ENCODE measurements at regions of chr7 and their contacts with region 1.

Region 1: DNA sequence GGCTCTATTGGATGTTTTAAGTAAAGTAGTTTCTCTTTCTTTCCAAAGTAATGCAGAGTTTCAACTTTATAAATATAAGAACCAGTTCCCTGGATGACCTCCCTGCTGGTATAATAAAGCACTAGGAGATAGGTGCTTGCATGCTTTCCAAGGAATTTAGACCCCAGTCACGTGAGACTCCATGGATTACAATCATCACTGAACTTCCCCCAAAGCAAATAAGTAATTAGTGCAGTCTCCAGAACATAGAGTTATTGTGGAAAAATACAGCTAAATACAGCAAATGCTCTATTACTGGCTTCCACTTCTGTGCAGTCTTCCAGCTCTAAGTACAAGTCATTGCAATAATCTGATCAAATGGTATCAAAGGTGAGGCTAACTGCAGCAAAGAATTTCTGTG is 220.2 kb upstream of the STEAP1 start:
- DNase-seq: no peak
- H3K4me3 ChIP-seq: no peak overlapping the region
- H3K27ac ChIP-seq: no peak overlapping the region
- H3K4me1 ChIP-seq: no peaks in the 10 kb centered on the region
- H3K27me3 ChIP-seq: no peaks in the 10 kb centered on the region
- CTCF ChIP-seq: no peak
- POLR2A ChIP-seq: no peak

Region 2: DNA sequence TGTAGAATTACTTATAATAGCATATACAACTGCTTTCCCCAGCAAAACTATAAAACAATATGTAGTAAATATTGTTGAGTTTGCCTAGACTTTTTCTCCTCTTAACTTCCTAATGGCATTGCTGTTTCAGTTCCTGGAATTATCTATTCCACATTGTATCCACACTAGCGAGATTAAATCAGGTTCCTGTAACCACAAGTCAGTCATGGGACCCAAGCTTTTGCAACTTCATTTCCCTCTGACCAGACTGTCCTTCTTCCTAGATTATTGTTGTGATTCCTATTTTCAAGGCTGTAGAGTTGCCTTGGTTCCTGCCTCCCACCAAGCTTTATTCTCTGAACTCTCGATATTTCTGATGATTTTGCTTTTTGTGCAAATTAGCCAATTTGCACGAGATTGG is 1347.9 kb before region 1 on chr7:
- intact Hi-C with region 1: loop called (anchors 10 kb)
- DNase-seq: no peak
- H3K4me3 ChIP-seq: no peak overlapping the region
- H3K27ac ChIP-seq: no peak overlapping the region
- H3K4me1 ChIP-seq: no peaks in the 10 kb centered on the region
- H3K27me3 ChIP-seq: no peaks in the 10 kb centered on the region
- CTCF ChIP-seq: no peak
- POLR2A ChIP-seq: no peak

Region 3: GRCh38 chr7:89605362-89605761 is 328.7 kb before region 1 on chr7:
- intact Hi-C with region 1: no loop called
- DNase-seq: no peak
- H3K4me3 ChIP-seq: no peak overlapping the region
- H3K27ac ChIP-seq: no peak overlapping the region
- H3K4me1 ChIP-seq: no peaks in the 10 kb centered on the region
- H3K27me3 ChIP-seq: no peaks in the 10 kb centered on the region
- CTCF ChIP-seq: no peak
- POLR2A ChIP-seq: no peak